Body of pancreas (tissue), 4 donors: ENCODE measurements at regions of chr17 and their contacts with region 1.

Region 1: GRCh38 chr17:67376737-67377487 is at the start of gene PITPNC1:
- DNase-seq: peak; percentile 88 to 92 (median 90)
- ATAC-seq: peak; percentile 83
- H3K4me3 ChIP-seq: peak within 1 kb of the TSS; percentile 61 to 72
- H3K27ac ChIP-seq: peak within 1 kb of the TSS; percentile 93 to 98 (median 96)
- H3K4me1 ChIP-seq: peaks cover 33% of the 10 kb centered on the region
- H3K27me3 ChIP-seq: no peaks in the 10 kb centered on the region
- CTCF ChIP-seq: peak in 1 of 7 experiments; percentile 29
- POLR2A ChIP-seq: peak; percentile 92 to 96 (median 94)
- total RNA-seq, gene PITPNC1: 11.9 to 17.5 TPM

Region 2: DNA sequence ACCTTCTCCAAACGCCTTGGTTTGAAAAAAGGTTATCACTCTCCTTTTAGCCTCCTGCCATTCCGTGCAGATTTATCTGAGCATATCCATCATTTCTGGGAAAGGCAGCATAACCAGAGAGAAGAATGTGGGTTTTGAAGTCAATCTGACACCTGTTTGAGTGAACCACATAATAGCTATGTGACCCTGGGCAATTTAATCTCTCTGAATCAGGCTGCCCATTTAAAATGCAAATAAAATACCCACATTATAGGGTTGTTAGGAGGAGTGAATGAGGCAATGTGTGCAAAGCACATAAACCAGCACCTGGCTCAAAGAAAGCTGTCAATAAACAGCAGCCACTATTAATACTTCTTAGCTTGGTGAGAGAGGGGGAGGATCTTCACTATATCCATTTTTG is 244.6 kb before region 1 on chr17:
- intact Hi-C with region 1: no loop called
- DNase-seq: no peak
- ATAC-seq: peak; percentile 4
- H3K4me3 ChIP-seq: no peak overlapping the region
- H3K27ac ChIP-seq: no peak overlapping the region
- H3K4me1 ChIP-seq: peaks cover 10% of the 10 kb centered on the region
- H3K27me3 ChIP-seq: no peaks in the 10 kb centered on the region
- CTCF ChIP-seq: no peak
- POLR2A ChIP-seq: no peak

Region 3: GRCh38 chr17:67602956-67603355 is 226.0 kb after region 1 on chr17:
- intact Hi-C with region 1: no loop called
- DNase-seq: peak; percentile 24 to 56 (median 44)
- ATAC-seq: peak; percentile 19
- H3K4me3 ChIP-seq: no peak overlapping the region
- H3K27ac ChIP-seq: peak overlapping the region in 1 of 4 donors; percentile 10
- H3K4me1 ChIP-seq: peaks cover 39% of the 10 kb centered on the region
- H3K27me3 ChIP-seq: no peaks in the 10 kb centered on the region
- CTCF ChIP-seq: peak in 6 of 7 experiments; percentile 19 to 54 (median 48)
- POLR2A ChIP-seq: no peak

Region 4: GRCh38 chr17:67689534-67690177 is 312.7 kb after region 1 on chr17:
- intact Hi-C with region 1: loop called (anchors 10 kb)
- DNase-seq: peak; percentile 62 to 76 (median 64)
- ATAC-seq: peak; percentile 80
- H3K4me3 ChIP-seq: no peak overlapping the region
- H3K27ac ChIP-seq: no peak overlapping the region
- H3K4me1 ChIP-seq: peaks cover 3% of the 10 kb centered on the region
- H3K27me3 ChIP-seq: no peaks in the 10 kb centered on the region
- CTCF ChIP-seq: peak; percentile 66 to 86 (median 77)
- POLR2A ChIP-seq: no peak